ENCODE measurements at regions of chr19 and their contacts with region 1.

Region 1: DNA sequence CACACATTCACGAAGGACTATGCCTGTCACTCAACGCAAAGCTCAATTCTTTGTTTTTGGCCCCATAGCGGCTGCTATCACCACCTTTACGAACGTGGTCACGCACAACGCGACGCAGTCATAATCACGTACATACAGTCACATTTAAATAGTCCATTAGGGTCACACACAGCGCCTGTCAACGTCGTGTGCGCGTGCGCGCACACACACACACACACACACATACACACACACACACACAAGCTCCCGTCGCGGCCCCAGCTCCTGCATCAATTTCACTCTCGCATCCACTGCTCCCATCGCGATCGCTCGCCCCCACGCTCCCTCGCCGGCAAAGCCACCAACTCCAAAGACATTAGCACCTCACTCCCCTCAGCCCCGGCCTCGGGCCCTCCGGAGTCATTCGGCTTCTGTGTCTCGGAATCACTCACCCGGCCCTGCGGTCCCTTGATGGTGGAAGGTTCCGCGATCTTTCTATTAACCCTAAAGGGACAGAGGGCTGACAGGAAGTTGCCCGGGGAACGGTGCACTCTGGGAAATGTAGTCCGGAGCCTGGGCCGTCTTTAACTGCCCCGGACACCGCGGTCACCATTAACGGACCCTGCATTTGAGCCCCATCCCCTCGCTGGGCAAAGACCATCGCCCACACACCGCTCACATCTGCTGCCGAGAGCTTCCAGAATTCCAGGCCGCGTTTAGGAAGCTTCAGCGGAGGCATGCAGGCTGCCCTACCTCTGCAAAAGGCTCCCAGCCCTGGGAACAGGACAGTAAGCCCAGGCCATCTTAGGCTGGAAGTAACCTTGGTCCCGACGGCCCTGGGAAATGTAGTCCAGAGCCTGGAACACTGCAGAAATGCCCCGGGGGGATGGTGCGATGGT is at the start of gene ZNF790:
- DNase-seq: peak; percentile 92
- H3K4me3 Mint-ChIP-seq: no peak within 1 kb of the TSS
- H3K27ac Mint-ChIP-seq: peak within 1 kb of the TSS; percentile 54
- H3K4me1 Mint-ChIP-seq: peaks cover 7% of the 10 kb centered on the region
- H3K27me3 Mint-ChIP-seq: no peaks in the 10 kb centered on the region
- total RNA-seq, gene ZNF790: 4.9 to 5.2 TPM

Region 2: DNA sequence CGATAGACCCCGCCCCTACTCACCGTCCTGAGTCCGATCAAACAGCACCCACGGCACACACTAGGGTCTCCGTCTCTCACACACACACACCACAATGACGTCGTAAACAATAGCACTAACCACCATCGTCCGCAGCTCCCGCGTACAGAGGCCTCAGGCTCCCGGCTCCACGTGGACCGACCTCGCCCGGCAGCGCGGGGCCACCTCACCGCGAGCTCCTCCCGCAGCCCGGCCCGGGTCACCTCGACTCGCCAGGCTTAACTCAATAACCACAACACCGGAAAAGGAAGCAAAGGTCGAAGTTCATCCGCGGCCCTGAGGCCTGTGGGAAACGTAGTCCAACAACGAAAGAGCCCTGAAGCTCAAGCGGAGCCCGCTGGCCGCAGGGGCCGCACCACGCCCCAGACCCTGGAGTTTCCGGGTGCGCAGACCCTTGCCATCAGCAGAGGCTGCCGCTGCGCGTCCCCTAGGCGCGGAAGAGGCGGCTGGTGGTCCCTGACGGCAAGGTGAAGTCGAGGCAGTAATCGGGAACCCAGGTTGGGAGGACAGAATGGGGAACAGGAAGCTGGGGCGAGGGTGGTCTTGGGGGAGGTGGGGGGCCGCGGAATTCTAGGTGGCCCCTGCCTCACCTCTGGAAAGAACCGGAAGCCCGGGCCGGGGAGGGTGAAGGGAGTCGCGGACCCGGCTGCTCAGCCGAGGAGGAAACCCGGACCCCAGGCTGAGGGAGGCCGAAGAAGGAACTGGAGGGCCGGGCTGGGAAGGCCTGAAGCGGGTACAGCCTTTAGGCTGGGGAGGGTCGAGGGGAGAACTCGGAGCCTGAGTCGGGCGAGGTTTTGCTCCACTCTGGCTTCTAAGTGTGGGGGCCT is 264.9 kb before region 1 on chr19 and contains the start of gene ZNF529:
- CTCF ChIA-PET with region 1: no interaction called
- intact Hi-C with region 1: loop called (anchors 10 kb)
- DNase-seq: peak; percentile 90
- H3K4me3 Mint-ChIP-seq: peak within 1 kb of the TSS; percentile 80
- H3K27ac Mint-ChIP-seq: peak within 1 kb of the TSS; percentile 85
- H3K4me1 Mint-ChIP-seq: peaks cover 20% of the 10 kb centered on the region
- H3K27me3 Mint-ChIP-seq: no peaks in the 10 kb centered on the region
- total RNA-seq, gene ZNF529: 17.1 to 18.3 TPM

Region 3: DNA sequence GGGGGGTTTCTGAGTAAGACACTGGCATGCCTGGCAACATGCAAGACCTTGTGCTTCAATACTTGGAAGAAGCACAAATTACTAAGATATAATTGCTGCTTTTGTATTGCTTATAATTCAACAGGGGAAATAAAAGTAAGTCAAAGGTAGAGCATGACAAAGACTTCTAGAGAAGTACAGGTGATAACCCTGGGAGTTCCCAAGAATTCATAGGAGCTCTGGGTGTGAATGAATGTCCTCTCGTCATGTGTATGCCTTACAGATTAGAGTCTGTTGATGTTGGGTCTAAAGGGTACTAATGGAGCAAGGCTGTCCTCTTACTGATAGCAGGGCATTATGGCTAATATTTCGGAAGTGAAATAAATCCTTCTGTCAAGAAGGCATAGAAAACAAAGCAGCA is 163.9 kb before region 1 on chr19:
- CTCF ChIA-PET with region 1: no interaction called
- intact Hi-C with region 1: no loop called
- DNase-seq: no peak
- H3K4me3 Mint-ChIP-seq: no peak overlapping the region
- H3K27ac Mint-ChIP-seq: no peak overlapping the region
- H3K4me1 Mint-ChIP-seq: no peaks in the 10 kb centered on the region
- H3K27me3 Mint-ChIP-seq: no peaks in the 10 kb centered on the region

Region 4: GRCh38 chr19:36821758-36822157 is 16.4 kb before region 1 on chr19:
- CTCF ChIA-PET with region 1: no interaction called
- intact Hi-C with region 1: no loop called
- DNase-seq: no peak
- H3K4me3 Mint-ChIP-seq: no peak overlapping the region
- H3K27ac Mint-ChIP-seq: no peak overlapping the region
- H3K4me1 Mint-ChIP-seq: no peaks in the 10 kb centered on the region
- H3K27me3 Mint-ChIP-seq: no peaks in the 10 kb centered on the region